Activated B cell treated with CpG ODN at 0.5 μM for 24 hours (primary cell): ENCODE measurements at regions of chr6 and their contacts with region 1.

Region 1: DNA sequence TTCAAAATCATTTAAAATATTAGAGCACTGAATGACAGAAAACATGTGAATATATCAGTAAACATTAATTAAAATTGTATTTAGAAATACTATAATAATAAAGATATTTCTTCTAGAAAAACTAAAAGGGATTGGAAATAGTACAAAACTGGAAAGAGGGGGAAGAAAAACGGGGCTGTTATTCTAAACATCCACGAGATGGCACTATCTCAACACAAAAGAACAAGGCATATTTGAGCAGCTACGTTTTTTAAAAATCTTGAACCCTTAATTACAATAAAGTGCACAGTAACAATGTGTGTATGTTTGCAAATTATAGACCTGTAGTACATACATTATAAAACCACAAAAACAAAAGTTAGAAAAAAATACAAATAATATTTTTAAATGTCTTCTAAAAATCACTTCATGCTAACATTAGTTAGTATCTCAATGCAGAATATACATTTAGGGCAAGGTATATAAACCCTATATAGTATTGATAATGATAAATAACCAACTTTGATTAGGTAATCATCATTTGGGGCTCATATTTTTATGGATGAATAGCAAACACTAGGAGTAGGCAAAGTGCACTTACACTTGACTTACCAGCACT is 42.5 kb upstream of the PNISR start:
- DNase-seq: no peak
- ATAC-seq: no peak
- H3K4me3 Mint-ChIP-seq: no peak overlapping the region
- H3K27ac Mint-ChIP-seq: no peak overlapping the region
- H3K4me1 Mint-ChIP-seq: no peaks in the 10 kb centered on the region
- H3K27me3 Mint-ChIP-seq: no peaks in the 10 kb centered on the region
- CTCF ChIP-seq: peak; percentile 97

Region 2: GRCh38 chr6:98272060-98272459 is 1195.5 kb before region 1 on chr6:
- CTCF ChIA-PET with region 1: no interaction called
- POLR2A ChIA-PET with region 1: no interaction called
- intact Hi-C with region 1: no loop called
- DNase-seq: no peak
- ATAC-seq: no peak
- H3K4me3 Mint-ChIP-seq: no peak overlapping the region
- H3K27ac Mint-ChIP-seq: no peak overlapping the region
- H3K4me1 Mint-ChIP-seq: no peaks in the 10 kb centered on the region
- H3K27me3 Mint-ChIP-seq: no peaks in the 10 kb centered on the region
- CTCF ChIP-seq: no peak

Region 3: GRCh38 chr6:99364026-99364425 is 103.6 kb before region 1 on chr6:
- CTCF ChIA-PET with region 1: no interaction called
- POLR2A ChIA-PET with region 1: no interaction called
- intact Hi-C with region 1: no loop called
- DNase-seq: no peak
- ATAC-seq: no peak
- H3K4me3 Mint-ChIP-seq: no peak overlapping the region
- H3K27ac Mint-ChIP-seq: no peak overlapping the region
- H3K4me1 Mint-ChIP-seq: no peaks in the 10 kb centered on the region
- H3K27me3 Mint-ChIP-seq: peaks cover 20% of the 10 kb centered on the region
- CTCF ChIP-seq: no peak

Region 4: DNA sequence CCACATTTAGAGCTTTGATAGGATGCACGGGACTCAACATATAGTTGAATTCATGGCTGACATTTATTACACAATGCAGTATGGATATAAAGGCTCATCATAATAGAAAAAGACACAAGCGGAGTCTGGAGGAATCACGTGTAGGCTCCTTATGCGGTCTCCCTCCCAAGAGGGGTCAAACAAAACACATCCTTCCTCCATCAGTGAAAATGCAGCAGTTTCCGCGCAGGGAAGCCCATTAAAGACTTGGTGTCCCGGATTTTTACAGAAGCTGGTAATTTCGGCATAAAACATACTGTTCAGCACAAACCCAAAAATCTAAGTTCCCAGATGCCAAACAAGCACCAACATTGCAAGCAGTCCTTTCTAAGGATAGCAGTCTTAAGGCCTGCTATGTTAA is 46.5 kb after region 1 on chr6:
- CTCF ChIA-PET with region 1: interaction called, 10 read pairs
- POLR2A ChIA-PET with region 1: interaction called, 4 read pairs
- intact Hi-C with region 1: no loop called
- DNase-seq: no peak
- ATAC-seq: no peak
- H3K4me3 Mint-ChIP-seq: peak overlapping the region; percentile 89
- H3K27ac Mint-ChIP-seq: peak overlapping the region; percentile 84
- H3K4me1 Mint-ChIP-seq: peaks cover 34% of the 10 kb centered on the region
- H3K27me3 Mint-ChIP-seq: no peaks in the 10 kb centered on the region
- CTCF ChIP-seq: no peak

Region 5: DNA sequence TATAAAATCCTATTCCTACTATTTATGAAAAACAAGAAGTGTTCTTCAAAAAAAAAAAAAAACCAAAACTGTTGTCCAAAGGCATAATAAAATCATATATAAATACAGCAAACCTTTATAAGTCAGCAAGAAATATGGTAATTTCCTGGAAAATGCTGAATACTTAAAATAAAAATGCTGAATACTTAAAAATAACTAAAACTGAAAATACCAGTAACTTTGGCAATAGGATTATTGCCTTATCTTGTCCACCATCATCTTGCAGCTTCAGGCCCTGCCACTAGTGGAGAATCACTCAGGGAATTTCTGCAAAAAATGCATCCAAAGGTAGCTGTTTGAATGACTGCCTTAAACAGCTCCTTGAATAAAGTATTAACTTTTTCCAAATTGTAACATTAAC is 76.4 kb after region 1 on chr6:
- CTCF ChIA-PET with region 1: interaction called, 6 read pairs
- POLR2A ChIA-PET with region 1: no interaction called
- intact Hi-C with region 1: loop called (anchors 2 kb)
- DNase-seq: no peak
- ATAC-seq: no peak
- H3K4me3 Mint-ChIP-seq: no peak overlapping the region
- H3K27ac Mint-ChIP-seq: no peak overlapping the region
- H3K4me1 Mint-ChIP-seq: no peaks in the 10 kb centered on the region
- H3K27me3 Mint-ChIP-seq: no peaks in the 10 kb centered on the region
- CTCF ChIP-seq: no peak

Region 6: DNA sequence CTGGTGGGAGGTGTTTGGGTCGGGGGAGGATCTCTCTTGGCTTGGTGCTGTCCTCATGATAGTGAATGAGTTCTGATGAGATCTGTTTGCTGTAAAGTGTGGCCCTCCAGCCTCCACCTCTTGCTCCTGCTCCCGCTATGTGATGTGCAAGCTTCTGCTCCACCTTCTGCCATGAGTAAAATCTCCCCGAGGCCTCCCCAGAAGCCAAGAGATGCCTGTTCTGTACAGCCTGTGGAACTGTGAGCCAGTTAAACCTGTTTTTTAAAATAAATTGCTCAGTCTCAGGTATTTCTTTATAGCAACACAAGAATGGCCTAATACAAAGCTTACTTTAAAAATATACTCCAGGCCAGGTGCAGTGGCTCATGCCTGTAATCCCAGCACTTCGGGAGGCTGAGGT is 112.2 kb after region 1 on chr6:
- CTCF ChIA-PET with region 1: no interaction called
- POLR2A ChIA-PET with region 1: no interaction called
- intact Hi-C with region 1: no loop called
- DNase-seq: no peak
- ATAC-seq: no peak
- H3K4me3 Mint-ChIP-seq: no peak overlapping the region
- H3K27ac Mint-ChIP-seq: no peak overlapping the region
- H3K4me1 Mint-ChIP-seq: no peaks in the 10 kb centered on the region
- H3K27me3 Mint-ChIP-seq: peaks cover 12% of the 10 kb centered on the region
- CTCF ChIP-seq: no peak

Region 7: GRCh38 chr6:99603421-99604165 is 136.0 kb after region 1 on chr6:
- CTCF ChIA-PET with region 1: interaction called, 3 read pairs
- POLR2A ChIA-PET with region 1: no interaction called
- intact Hi-C with region 1: loop called (anchors 1 kb)
- DNase-seq: no peak
- ATAC-seq: peak; percentile 54
- H3K4me3 Mint-ChIP-seq: peak overlapping the region; percentile 76
- H3K27ac Mint-ChIP-seq: no peak overlapping the region
- H3K4me1 Mint-ChIP-seq: peaks cover 30% of the 10 kb centered on the region
- H3K27me3 Mint-ChIP-seq: peaks cover 74% of the 10 kb centered on the region
- CTCF ChIP-seq: no peak

Region 8: GRCh38 chr6:99746261-99746895 is 278.8 kb after region 1 on chr6:
- CTCF ChIA-PET with region 1: interaction called, 65 read pairs
- POLR2A ChIA-PET with region 1: interaction called, 3 read pairs
- intact Hi-C with region 1: loop called (anchors 1 kb)
- DNase-seq: no peak
- ATAC-seq: peak; percentile 82
- H3K4me3 Mint-ChIP-seq: no peak overlapping the region
- H3K27ac Mint-ChIP-seq: no peak overlapping the region
- H3K4me1 Mint-ChIP-seq: no peaks in the 10 kb centered on the region
- H3K27me3 Mint-ChIP-seq: peaks cover 21% of the 10 kb centered on the region
- CTCF ChIP-seq: peak; percentile 16

Region 9: GRCh38 chr6:99802396-99803031 is 334.9 kb after region 1 on chr6:
- CTCF ChIA-PET with region 1: no interaction called
- POLR2A ChIA-PET with region 1: no interaction called
- intact Hi-C with region 1: no loop called
- DNase-seq: no peak
- ATAC-seq: no peak
- H3K4me3 Mint-ChIP-seq: no peak overlapping the region
- H3K27ac Mint-ChIP-seq: no peak overlapping the region
- H3K4me1 Mint-ChIP-seq: no peaks in the 10 kb centered on the region
- H3K27me3 Mint-ChIP-seq: peaks cover 4% of the 10 kb centered on the region
- CTCF ChIP-seq: no peak

Region 10: DNA sequence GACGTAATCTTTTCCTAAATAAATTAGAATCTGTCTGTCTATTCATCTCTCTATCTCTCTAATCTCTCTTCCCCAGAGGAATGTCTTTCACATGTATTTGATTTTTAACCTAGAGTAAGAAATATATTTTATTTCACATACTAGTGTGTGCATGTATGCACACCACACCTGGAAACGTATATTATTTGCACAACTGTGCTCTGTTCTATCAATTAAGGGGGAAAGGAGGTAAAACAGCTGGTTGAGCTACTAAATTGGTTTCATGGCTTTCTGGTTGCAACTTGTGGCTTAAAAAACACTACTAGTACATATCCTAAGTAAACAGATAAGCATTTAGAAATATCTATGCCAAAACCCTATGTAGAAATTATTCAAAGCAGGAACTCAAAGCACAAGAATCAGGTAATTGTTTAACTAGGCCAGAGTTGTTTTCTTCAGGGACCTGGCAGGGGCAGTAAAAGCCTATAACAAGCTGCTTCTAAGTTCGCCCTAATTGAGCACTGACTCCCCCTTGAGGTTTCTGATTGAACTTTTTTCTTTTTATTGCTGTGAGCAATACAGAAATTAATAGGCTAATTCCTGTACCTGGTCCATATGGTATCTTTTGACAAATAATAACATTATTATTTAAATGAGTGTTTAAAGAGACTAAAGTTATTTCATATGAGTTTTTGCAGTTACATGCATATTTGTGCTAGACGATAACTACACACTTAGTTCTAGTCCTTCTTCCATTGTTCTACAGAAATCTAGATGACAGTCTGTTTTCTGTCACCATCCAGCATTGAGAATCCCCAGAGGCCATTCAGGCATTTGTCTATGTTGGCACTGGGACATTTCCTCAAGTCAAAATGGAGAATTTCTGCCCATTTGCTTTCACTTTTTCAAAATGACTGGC is 437.9 kb after region 1 on chr6:
- CTCF ChIA-PET with region 1: no interaction called
- POLR2A ChIA-PET with region 1: no interaction called
- intact Hi-C with region 1: loop called (anchors 5 kb)
- DNase-seq: no peak
- ATAC-seq: no peak
- H3K4me3 Mint-ChIP-seq: no peak overlapping the region
- H3K27ac Mint-ChIP-seq: no peak overlapping the region
- H3K4me1 Mint-ChIP-seq: no peaks in the 10 kb centered on the region
- H3K27me3 Mint-ChIP-seq: no peaks in the 10 kb centered on the region
- CTCF ChIP-seq: no peak